ENCODE measurements at regions of chr1 and their contacts with region 1.

Region 1: GRCh38 chr1:2194898-2195673 is 514 bp upstream of the FAAP20 start:
- DNase-seq: peak; percentile 92
- H3K4me3 Mint-ChIP-seq: peak overlapping the region; percentile 78
- H3K27ac Mint-ChIP-seq: peak overlapping the region; percentile 93
- H3K4me1 Mint-ChIP-seq: peaks cover 35% of the 10 kb centered on the region
- H3K27me3 Mint-ChIP-seq: no peaks in the 10 kb centered on the region

Region 2: DNA sequence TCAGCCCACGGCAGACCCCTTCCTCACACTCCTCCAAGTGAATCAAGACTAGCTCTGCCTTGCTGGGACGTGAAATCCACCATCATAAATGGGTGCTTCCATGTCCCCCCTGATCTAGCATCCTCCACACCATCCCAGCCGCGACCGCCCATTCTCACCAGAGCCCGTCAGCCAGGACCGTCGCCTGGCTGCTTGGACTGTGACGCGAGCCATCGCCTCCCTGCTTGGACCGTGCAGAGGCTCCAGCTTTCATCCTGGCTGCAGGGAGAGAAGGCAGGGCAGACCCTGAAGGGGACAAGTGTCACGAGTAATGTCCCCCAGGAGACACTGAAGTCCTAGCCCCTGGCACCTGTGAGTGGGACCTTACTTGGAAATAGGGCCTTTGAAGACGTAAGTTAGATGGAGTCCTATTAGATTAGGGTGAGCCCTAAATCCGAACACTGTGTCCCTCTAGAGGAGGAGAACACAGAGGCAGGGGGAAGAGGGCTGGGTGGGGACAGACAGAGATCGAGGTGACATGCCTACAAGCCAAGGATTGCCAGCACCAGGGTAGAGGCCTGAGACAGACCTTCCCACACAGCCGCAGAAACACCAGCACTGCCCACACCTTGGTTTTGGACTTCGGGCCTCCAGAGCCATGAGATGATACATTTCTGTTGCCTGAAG is 157.6 kb before region 1 on chr1:
- CTCF ChIA-PET with region 1: no interaction called
- intact Hi-C with region 1: no loop called
- DNase-seq: no peak
- H3K4me3 Mint-ChIP-seq: no peak overlapping the region
- H3K27ac Mint-ChIP-seq: no peak overlapping the region
- H3K4me1 Mint-ChIP-seq: no peaks in the 10 kb centered on the region
- H3K27me3 Mint-ChIP-seq: no peaks in the 10 kb centered on the region

Region 3: GRCh38 chr1:2233997-2234761 is 39.1 kb after region 1 on chr1:
- CTCF ChIA-PET with region 1: interaction called, 8 read pairs
- intact Hi-C with region 1: loop called (anchors 1 kb)
- DNase-seq: peak; percentile 82
- H3K4me3 Mint-ChIP-seq: peak overlapping the region; percentile 98
- H3K27ac Mint-ChIP-seq: peak overlapping the region; percentile 94
- H3K4me1 Mint-ChIP-seq: peaks cover 61% of the 10 kb centered on the region
- H3K27me3 Mint-ChIP-seq: no peaks in the 10 kb centered on the region

Region 4: GRCh38 chr1:2314803-2315673 is 120.0 kb after region 1 on chr1:
- CTCF ChIA-PET with region 1: interaction called, 9 read pairs
- intact Hi-C with region 1: loop called (anchors 1 kb)
- DNase-seq: peak; percentile 54
- H3K4me3 Mint-ChIP-seq: peak overlapping the region; percentile 34
- H3K27ac Mint-ChIP-seq: peak overlapping the region; percentile 13
- H3K4me1 Mint-ChIP-seq: peaks cover 4% of the 10 kb centered on the region
- H3K27me3 Mint-ChIP-seq: no peaks in the 10 kb centered on the region

Region 5: GRCh38 chr1:2391041-2391930 is 196.2 kb after region 1 on chr1 and contains the starts of genes MORN1 and RER1:
- CTCF ChIA-PET with region 1: interaction called, 9 read pairs
- intact Hi-C with region 1: loop called (anchors 1 kb)
- DNase-seq: peak; percentile 99
- H3K4me3 Mint-ChIP-seq: peak within 1 kb of the TSS; percentile 88
- H3K27ac Mint-ChIP-seq: peak within 1 kb of the TSS; percentile 79
- H3K4me1 Mint-ChIP-seq: peaks cover 40% of the 10 kb centered on the region
- H3K27me3 Mint-ChIP-seq: no peaks in the 10 kb centered on the region
- total RNA-seq, gene MORN1: 3.2 to 4.9 TPM
- total RNA-seq, gene RER1: 115 to 124 TPM

Region 6: GRCh38 chr1:2525920-2526823 is 331.1 kb after region 1 on chr1 and contains the start of gene PANK4:
- CTCF ChIA-PET with region 1: no interaction called
- intact Hi-C with region 1: loop called (anchors 5 kb)
- DNase-seq: peak; percentile 90
- H3K4me3 Mint-ChIP-seq: peak within 1 kb of the TSS; percentile 87
- H3K27ac Mint-ChIP-seq: peak within 1 kb of the TSS; percentile 97
- H3K4me1 Mint-ChIP-seq: peaks cover 47% of the 10 kb centered on the region
- H3K27me3 Mint-ChIP-seq: peaks cover 3% of the 10 kb centered on the region
- total RNA-seq, gene PANK4: 46.6 to 51.4 TPM

Region 7: DNA sequence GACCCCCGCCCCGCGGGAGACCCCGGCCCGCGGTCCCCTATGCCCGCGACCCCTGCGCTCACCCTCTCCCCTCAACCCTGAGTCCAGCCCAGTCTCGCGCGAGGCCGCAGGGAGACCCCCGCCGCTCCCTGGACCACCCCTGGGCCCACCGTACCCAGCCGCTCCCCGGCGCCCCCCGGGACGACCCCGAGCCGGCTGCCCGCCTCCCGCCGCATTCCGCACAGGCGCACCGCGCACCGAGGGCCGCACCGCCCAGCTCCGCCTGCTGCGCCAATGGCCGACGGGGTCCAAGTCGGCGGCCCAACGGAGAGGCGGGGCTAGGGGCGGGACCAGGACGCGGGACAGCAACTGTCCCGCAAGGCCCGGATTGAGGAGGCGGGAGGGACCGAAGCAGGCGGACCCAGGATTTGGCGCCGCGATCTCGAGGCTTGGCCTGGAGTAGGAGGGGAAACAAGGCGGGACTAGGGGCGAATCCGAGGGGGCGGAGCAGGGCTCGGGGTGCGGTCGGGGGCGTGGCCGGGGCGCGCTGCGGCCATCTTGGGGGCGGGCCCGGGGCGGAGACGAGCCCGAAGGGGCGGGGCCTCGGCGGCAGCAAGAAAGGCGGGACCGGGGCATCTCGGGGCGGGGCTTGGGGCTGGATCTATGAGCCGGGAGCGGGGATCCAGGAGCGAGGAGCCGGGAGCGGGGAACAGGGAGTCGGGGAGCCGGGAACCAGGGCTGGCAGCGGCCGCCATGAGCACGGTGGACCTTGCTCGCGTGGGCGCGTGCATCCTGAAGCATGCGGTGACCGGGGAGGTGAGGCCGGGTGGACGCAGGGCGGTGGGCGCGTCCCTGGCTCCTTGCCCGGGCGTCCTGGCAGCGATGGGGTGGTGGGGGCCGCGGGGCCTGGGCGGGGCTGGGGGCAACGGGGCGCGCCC is 391.3 kb after region 1 on chr1 and contains the start of gene PRXL2B:
- CTCF ChIA-PET with region 1: interaction called, 4 read pairs
- intact Hi-C with region 1: loop called (anchors 2 kb)
- DNase-seq: peak; percentile 99
- H3K4me3 Mint-ChIP-seq: peak within 1 kb of the TSS; percentile 80
- H3K27ac Mint-ChIP-seq: peak within 1 kb of the TSS; percentile 91
- H3K4me1 Mint-ChIP-seq: peaks cover 46% of the 10 kb centered on the region
- H3K27me3 Mint-ChIP-seq: no peaks in the 10 kb centered on the region
- total RNA-seq, gene PRXL2B: 21.8 to 22.1 TPM